ENCODE measurements at regions of chr16 and their contacts with region 1.

Region 1: DNA sequence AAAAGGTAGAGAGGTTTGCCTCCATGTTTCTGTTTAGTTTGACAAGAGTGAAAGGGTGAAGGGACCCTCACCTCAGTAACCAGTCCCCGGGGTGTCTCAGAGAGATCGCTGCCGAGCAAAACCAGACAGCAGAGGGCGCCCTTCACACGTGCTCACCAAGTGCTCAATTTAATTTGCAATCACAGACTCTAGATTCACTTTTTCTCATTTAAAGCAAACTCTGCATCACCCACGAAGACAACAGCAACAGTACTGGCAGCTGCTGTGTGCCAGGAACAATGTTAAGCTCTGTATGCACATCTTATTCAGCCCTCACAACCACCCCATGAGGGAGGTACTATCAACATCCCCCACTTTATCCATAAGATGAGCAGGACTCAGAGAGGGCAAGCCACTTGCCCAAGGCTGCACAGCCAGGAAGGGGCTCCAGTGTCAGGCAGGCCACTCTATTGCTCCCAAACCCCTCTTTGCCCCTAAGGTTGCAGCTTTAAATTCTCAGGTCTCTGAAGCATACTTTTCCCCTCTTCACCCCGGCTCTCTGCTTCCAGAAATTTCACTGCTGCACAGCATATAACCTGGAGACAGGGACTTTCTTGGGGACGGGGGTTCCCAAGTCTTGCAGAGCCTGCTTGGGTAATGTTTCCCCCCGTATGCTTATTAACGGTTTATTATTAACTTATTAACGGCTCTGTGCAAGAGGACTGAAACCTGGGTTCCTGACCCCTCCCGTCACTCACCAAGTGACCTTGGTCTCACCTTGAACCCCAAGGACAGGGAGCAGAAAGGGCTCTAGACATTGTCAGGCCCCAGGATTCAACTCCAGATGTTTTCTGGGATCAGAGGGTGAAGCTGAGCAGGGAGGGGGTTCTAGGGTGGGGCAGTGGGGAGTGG is 70.9 kb downstream of the CNGB1 start:
- DNase-seq: peak; percentile 87
- ATAC-seq: peak; percentile 77
- H3K4me3 Mint-ChIP-seq: no peak overlapping the region
- H3K27ac Mint-ChIP-seq: no peak overlapping the region
- H3K4me1 Mint-ChIP-seq: peaks cover under 1% of the 10 kb centered on the region
- H3K27me3 Mint-ChIP-seq: peaks cover 8% of the 10 kb centered on the region

Region 2: GRCh38 chr16:56519459-56520250 is 1380.4 kb before region 1 on chr16 and contains the start of gene BBS2:
- CTCF ChIA-PET with region 1: no interaction called
- POLR2A ChIA-PET with region 1: no interaction called
- intact Hi-C with region 1: no loop called
- DNase-seq: peak; percentile 93
- ATAC-seq: peak; percentile 90
- H3K4me3 Mint-ChIP-seq: peak within 1 kb of the TSS; percentile 79
- H3K27ac Mint-ChIP-seq: peak within 1 kb of the TSS; percentile 61
- H3K4me1 Mint-ChIP-seq: peaks cover 32% of the 10 kb centered on the region
- H3K27me3 Mint-ChIP-seq: no peaks in the 10 kb centered on the region
- total RNA-seq, gene BBS2: 15.4 to 23.2 TPM

Region 3: DNA sequence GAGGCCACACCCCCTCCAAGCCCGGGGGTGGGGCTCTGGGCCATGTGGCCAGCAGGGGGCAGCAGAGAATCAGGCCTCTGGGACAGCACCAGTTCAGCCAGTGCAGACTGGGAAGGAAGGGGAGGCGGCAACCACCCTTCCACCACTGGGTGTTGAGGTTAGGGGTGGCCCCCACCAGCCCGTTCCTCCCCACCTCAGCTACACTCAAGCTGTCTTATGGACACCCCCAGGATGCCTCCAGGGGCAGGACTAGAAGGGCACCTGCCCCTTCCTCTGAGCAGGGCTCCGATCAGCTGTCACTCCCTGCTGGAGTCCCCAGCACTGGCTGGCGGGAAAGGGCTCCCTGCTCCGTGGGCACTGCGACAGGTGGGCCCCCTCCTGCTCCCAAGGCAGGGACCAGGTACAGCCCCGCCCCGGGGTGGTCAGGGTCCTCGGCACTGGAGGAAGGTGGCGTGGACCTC is 142.7 kb before region 1 on chr16:
- CTCF ChIA-PET with region 1: interaction called, 3 read pairs
- POLR2A ChIA-PET with region 1: no interaction called
- intact Hi-C with region 1: loop called (anchors 1 to 10 kb)
- DNase-seq: peak; percentile 93
- ATAC-seq: peak; percentile 98
- H3K4me3 Mint-ChIP-seq: no peak overlapping the region
- H3K27ac Mint-ChIP-seq: no peak overlapping the region
- H3K4me1 Mint-ChIP-seq: peaks cover 2% of the 10 kb centered on the region
- H3K27me3 Mint-ChIP-seq: no peaks in the 10 kb centered on the region

Region 4: GRCh38 chr16:57882792-57883191 is 17.2 kb before region 1 on chr16:
- CTCF ChIA-PET with region 1: interaction called, 12 read pairs
- POLR2A ChIA-PET with region 1: interaction called, 3 read pairs
- intact Hi-C with region 1: no loop called
- DNase-seq: no peak
- ATAC-seq: no peak
- H3K4me3 Mint-ChIP-seq: no peak overlapping the region
- H3K27ac Mint-ChIP-seq: no peak overlapping the region
- H3K4me1 Mint-ChIP-seq: peaks cover 2% of the 10 kb centered on the region
- H3K27me3 Mint-ChIP-seq: peaks cover 30% of the 10 kb centered on the region

Region 5: GRCh38 chr16:58306327-58306726 is 406.3 kb after region 1 on chr16:
- CTCF ChIA-PET with region 1: interaction called, 3 read pairs
- POLR2A ChIA-PET with region 1: no interaction called
- intact Hi-C with region 1: loop called (anchors 5 to 10 kb)
- DNase-seq: peak; percentile 81
- ATAC-seq: no peak
- H3K4me3 Mint-ChIP-seq: no peak overlapping the region
- H3K27ac Mint-ChIP-seq: no peak overlapping the region
- H3K4me1 Mint-ChIP-seq: no peaks in the 10 kb centered on the region
- H3K27me3 Mint-ChIP-seq: peaks cover 7% of the 10 kb centered on the region